Mucosa of descending colon (tissue), 3 donors: ENCODE measurements at regions of chr19 and their contacts with region 1.

Region 1: GRCh38 chr19:58154679-58155648 is 4.4 kb upstream of the ZNF329 start:
- DNase-seq: peak; percentile 96 to 99 (median 97)
- ATAC-seq: peak; percentile 97
- H3K4me3 ChIP-seq: peak overlapping the region; percentile 68
- H3K4me1 ChIP-seq: peaks cover 16% of the 10 kb centered on the region
- CTCF ChIP-seq: peak; percentile 97

Region 2: DNA sequence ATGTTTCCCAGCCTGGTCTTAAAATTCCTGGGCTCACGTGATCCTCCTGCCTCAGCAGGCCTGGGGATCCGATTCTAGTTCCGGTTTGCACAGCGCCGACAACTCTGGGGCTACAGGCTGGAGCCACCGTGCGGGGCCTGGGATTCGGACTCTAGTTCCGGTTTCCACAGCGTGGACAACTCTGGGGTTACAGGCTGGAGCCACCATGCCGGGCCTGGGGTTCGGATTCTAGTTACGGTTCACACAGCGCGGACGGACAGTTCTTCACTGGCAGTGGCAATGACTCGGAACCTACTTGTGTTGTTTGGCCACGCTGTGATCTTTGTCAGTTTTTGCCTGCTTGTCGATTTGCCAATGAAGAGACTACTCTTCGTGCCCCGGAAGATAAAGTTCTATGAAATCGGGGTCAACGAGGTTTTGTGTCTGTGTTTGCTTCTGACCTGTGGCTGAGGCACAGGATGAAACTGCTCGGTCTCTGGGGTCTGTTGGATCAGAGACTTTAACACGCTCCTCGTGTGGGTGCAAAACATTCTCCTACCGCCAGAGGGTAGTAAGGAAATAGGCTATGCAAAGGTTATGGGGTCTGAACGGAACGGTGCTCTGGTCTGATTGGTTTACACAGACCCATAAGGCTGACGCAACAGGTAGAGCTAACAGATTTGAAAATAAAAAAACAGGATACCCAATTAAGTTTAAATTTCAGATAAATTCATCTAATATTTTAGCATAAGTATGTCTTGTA is 133.3 kb before region 1 on chr19:
- intact Hi-C with region 1: loop called (anchors 5 kb)
- DNase-seq: peak in 1 of 3 donors; percentile 64
- ATAC-seq: peak; percentile 60
- H3K4me3 ChIP-seq: no peak overlapping the region
- H3K4me1 ChIP-seq: no peaks in the 10 kb centered on the region
- CTCF ChIP-seq: no peak